Panc1 (cell line): ENCODE measurements at regions of chr6 and their contacts with region 1.

Region 1: GRCh38 chr6:37190159-37190535 is 20.2 kb downstream of the PIM1 start:
- DNase-seq: no peak
- ATAC-seq: no peak
- H3K4me3 ChIP-seq: no peak overlapping the region
- H3K27ac ChIP-seq: no peak overlapping the region
- H3K4me1 ChIP-seq: no peaks in the 10 kb centered on the region; the same call in 1 of the 2 replicates
- H3K27me3 ChIP-seq: no peaks in the 10 kb centered on the region
- CTCF ChIP-seq: no peak

Region 2: DNA sequence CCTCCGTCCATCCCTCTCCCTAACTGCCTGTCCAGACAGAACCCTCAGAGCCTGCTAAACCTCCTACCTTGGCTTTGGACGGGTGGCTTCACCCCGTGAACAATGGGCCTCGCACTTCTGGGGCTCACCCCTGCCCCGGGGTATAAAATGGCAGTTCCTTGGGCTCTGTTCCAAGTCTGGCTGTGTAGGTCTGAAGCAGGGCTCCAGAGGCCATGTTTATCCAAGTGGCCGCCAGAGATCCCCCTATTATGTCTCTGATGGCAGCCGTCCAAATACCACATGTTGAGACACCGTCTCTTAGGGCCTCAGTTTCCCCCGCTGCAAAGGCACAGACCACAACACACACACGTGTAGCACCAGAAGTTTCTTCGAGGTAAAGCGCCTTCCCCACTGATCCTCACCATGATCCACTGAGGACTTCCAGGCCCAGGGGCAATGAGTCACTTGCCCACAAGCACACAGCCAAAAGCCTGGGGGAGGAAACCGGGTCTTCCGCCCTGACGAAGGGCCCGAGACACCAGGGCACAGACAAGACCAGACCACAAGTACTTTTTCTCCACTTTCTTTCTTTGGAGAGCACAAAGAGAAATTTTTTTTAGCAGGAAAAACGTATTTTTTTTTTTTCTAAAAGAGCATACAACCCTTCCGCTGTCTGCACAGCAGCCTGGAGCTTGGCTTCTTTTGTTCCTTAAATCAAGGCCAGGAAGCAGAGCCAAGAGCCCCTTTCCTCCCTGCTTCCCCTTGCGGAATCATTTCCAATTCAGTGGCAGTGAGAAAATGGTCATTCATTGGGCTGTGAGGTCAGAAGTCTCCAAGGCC is 362.7 kb before region 1 on chr6:
- CTCF ChIA-PET with region 1: no interaction called
- POLR2A ChIA-PET with region 1: interaction called, 12 read pairs
- in situ Hi-C with region 1: no loop called
- intact Hi-C with region 1: no loop called
- DNase-seq: no peak
- ATAC-seq: peak; percentile 52; the same call in 1 of the 2 replicates
- H3K4me3 ChIP-seq: no peak overlapping the region
- H3K27ac ChIP-seq: no peak overlapping the region
- H3K4me1 ChIP-seq: peaks cover 5% of the 10 kb centered on the region; the same call in 1 of the 2 replicates
- H3K27me3 ChIP-seq: no peaks in the 10 kb centered on the region
- CTCF ChIP-seq: no peak

Region 3: GRCh38 chr6:36962874-36963273 is 227.3 kb before region 1 on chr6:
- CTCF ChIA-PET with region 1: no interaction called
- POLR2A ChIA-PET with region 1: no interaction called
- in situ Hi-C with region 1: no loop called
- intact Hi-C with region 1: no loop called
- DNase-seq: no peak
- ATAC-seq: no peak
- H3K4me3 ChIP-seq: no peak overlapping the region
- H3K27ac ChIP-seq: no peak overlapping the region
- H3K4me1 ChIP-seq: peaks cover 8% of the 10 kb centered on the region; the same call in 1 of the 2 replicates
- H3K27me3 ChIP-seq: no peaks in the 10 kb centered on the region
- CTCF ChIP-seq: no peak

Region 4: DNA sequence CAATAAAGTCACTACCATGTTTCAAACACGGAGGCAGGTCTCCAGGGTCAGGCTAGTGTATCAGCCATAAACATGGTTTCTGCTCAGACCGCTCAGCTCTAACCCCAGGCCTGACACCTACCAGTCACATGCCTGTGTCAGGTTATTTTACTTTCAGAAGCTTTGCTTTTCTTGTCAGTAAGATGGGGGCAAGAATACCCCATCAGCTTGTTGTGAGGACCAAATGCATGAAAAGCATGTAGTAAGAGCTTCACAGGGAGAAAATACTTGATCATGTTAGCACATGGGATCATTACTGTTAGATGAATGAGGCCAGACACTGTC is 85.4 kb before region 1 on chr6:
- CTCF ChIA-PET with region 1: no interaction called
- POLR2A ChIA-PET with region 1: interaction called, 10 read pairs
- in situ Hi-C with region 1: no loop called
- intact Hi-C with region 1: no loop called
- DNase-seq: no peak
- ATAC-seq: no peak
- H3K4me3 ChIP-seq: no peak overlapping the region
- H3K27ac ChIP-seq: peak overlapping the region; percentile 92
- H3K4me1 ChIP-seq: peaks cover 41% of the 10 kb centered on the region
- H3K27me3 ChIP-seq: no peaks in the 10 kb centered on the region
- CTCF ChIP-seq: no peak